ENCODE measurements at regions of chr5 and their contacts with region 1.

Region 1: DNA sequence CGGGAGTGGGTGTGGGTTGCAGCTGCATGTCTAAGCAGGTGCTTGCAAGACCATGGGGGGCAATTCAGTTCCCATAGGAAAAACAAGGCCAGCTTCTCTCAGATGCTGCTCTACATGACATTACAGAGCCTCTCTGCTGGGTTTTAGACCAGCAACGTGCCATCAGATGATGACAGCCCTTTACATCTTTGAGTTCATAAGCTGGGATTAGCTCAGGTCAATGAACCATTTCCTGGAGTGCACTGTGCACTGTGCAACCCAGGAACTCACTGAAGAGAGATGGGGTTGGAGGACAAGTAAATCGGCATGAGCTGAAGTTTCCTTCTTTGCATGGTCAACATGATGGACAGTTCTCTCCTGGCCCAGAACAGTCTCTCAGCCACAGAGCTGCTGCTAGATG is 160.6 kb downstream of the MARCHF11 start:
- DNase-seq: no peak
- ATAC-seq: no peak
- H3K4me3 ChIP-seq: no peak overlapping the region
- H3K27ac ChIP-seq: no peak overlapping the region
- H3K4me1 ChIP-seq: no peaks in the 10 kb centered on the region
- H3K27me3 ChIP-seq: no peaks in the 10 kb centered on the region
- CTCF ChIP-seq: no peak
- POLR2A ChIP-seq: no peak

Region 2: DNA sequence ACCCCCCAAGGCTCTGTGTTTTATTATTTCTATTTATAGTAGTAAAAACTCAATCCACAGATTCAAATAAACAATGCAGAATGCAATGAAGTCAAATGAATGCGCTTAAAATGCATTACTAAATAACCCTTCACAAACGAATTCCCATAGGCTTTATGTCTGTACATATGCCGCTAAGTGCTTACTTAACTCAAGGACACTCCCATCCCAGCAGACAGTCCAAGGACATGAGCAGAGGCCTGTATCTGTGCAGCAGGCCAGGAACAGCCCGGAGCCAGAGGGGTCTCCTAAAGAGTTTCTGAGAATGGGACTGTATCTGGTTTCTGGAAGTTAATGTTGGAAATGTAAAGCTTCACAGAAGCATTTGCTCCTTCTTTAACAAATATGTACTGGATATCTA is 100.8 kb after region 1 on chr5:
- intact Hi-C with region 1: loop called in 1 of 10 experiments (anchors 5 kb)
- DNase-seq: no peak
- ATAC-seq: no peak
- H3K4me3 ChIP-seq: no peak overlapping the region
- H3K27ac ChIP-seq: no peak overlapping the region
- H3K4me1 ChIP-seq: peaks cover 0 to 11% (median 0%) of the 10 kb centered on the region in 12 donors
- H3K27me3 ChIP-seq: no peaks in the 10 kb centered on the region
- CTCF ChIP-seq: no peak
- POLR2A ChIP-seq: no peak

Measured in heart left ventricle (tissue), 16 donors.